Calu3 (cell line): ENCODE measurements at regions of chr9 and their contacts with region 1.

Region 1: DNA sequence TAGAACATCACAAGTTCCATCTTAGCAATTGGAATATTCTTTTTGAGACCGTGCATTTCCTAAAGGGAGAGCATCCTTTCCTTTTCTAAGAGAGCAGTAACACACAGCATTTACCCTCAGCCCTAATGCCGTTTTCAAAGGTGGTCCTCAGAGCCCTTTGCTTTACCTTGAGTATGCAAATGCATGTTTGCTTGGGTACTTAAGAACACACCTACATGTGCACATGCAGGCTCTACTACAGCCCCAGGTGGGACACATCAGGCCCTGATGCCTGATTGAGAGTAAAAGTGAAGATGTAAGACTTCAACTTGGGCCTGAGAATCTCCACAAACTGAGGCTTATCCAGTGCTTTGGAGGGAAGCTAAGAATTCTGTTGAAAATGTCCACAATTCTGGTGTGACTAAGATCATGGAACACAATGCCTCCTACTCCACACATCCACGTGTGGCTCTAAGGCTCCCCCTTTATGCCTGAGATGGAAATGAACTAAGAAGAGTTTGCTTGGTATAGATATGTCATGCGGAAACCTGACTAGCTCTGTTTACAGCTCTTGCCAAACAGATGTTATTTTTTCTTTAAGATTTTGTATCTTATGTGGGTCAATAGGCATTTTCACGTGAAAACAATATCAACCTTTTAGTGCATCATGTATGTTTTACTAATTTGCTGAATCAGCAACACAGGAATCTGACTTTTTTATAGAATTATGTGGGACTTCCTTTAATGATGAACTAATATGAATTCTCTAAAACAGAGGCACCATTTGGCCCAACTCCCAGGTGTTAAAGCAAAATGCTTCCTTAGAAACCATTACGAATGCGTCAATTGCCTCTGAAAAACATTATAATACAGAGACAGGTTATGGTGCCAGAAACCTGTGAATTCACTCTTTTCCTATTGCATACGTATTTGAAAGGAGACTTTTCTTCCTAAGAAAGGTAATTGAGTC is 48.9 kb upstream of the SLC2A8 start:
- DNase-seq: peak; percentile 8
- H3K4me3 Mint-ChIP-seq: no peak overlapping the region
- H3K27ac Mint-ChIP-seq: no peak overlapping the region
- H3K4me1 Mint-ChIP-seq: no peaks in the 10 kb centered on the region
- H3K27me3 Mint-ChIP-seq: no peaks in the 10 kb centered on the region
- CTCF ChIP-seq: peak; percentile 36

Region 2: DNA sequence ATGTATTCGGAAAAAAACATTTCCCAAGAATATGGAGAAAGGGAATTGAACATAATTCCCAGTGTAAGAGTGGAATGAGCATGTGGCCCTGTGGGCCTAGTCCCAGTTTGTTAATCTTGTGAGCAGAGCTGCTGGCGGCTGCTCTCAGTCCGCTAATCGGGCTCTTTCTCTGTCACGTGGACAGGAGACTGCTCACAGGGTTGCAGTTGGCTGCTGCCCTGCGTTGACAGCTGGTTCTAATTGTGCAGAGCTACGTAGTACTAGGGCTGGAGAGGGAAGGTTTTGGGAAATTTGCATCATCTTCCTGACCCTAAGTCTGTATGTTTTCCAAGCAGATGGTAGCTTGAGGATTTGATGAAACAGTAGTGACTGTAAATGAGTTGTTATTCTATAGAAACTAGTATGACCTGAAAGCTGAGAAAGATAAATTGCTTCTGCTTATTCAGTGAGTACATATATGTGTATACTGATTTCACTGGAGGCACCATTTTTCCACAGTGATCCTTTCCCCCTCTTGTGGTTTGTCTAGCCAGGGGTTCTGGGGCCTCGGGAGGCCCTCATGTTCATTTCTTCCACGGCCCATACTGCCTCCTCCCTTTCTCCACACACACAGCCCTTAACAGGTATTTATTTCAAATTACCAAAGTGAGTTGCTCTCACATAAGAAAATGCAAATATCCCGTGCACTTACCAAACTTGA is 326.3 kb before region 1 on chr9:
- CTCF ChIA-PET with region 1: no interaction called
- intact Hi-C with region 1: no loop called
- DNase-seq: no peak
- H3K4me3 Mint-ChIP-seq: no peak overlapping the region
- H3K27ac Mint-ChIP-seq: no peak overlapping the region
- H3K4me1 Mint-ChIP-seq: peaks cover 21% of the 10 kb centered on the region
- H3K27me3 Mint-ChIP-seq: no peaks in the 10 kb centered on the region
- CTCF ChIP-seq: no peak

Region 3: DNA sequence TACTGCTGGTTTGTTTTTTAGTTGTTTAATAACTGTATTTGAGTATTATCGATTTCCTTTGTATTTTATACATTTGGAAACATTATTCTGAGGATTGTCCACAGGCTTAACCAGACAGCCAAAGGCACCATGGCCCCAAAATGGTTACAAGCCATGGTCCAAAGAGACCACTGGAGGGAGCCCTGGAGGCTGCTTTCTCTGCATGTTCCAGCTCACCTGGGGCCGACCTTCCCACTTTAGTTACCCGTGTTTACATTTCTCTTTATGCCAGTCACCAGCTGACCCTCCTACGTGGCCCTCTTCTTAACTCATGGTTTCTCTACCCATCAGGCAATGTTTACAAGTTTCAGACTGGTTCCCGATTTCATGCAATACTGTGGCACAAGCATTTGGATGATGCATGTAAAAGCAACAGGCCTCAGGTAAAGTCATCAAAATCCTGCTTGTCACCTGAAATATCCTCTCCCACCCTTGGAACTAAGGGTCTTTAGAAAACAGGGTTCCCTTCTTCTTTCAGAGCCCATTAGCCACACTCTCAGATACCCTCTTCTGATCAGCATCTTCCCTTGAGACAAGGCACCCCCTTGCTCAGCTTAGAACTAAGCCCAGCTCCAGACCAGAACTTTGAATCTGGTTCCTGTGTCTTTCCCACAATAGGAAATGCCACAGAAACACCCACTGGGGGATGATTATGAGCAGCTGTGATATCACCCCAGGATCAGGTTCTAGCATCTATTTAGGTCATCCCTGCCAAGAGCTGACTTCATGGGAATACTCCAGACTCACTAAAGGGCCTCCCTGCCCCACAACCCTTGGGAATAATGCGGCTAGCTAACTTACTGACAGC is 133.5 kb before region 1 on chr9:
- CTCF ChIA-PET with region 1: interaction called, 10 read pairs
- intact Hi-C with region 1: loop called (anchors 5 kb)
- DNase-seq: peak; percentile 68
- H3K4me3 Mint-ChIP-seq: no peak overlapping the region
- H3K27ac Mint-ChIP-seq: no peak overlapping the region
- H3K4me1 Mint-ChIP-seq: peaks cover 7% of the 10 kb centered on the region
- H3K27me3 Mint-ChIP-seq: peaks cover 19% of the 10 kb centered on the region
- CTCF ChIP-seq: peak; percentile 63

Region 4: DNA sequence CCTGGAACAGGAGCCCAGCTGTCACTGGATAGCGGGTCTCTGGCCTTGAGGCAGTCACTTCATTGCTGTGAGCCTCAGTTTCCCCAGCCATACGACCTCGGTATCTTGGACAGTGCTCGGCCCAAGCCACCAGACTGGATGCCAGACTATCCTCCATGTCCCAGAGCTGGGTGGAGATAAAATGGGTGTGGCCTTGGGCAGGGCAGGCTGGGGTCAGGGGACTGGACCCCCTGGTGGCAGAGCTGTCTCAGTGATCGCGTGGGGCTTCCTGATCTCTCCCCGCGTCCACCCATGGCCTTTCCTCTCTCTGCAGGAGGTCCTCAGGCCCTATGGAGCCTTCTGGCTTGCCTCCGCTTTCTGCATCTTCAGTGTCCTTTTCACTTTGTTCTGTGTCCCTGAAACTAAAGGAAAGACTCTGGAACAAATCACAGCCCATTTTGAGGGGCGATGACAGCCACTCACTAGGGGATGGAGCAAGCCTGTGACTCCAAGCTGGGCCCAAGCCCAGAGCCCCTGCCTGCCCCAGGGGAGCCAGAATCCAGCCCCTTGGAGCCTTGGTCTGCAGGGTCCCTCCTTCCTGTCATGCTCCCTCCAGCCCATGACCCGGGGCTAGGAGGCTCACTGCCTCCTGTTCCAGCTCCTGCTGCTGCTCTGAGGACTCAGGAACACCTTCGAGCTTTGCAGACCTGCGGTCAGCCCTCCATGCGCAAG is 58.8 kb after region 1 on chr9:
- CTCF ChIA-PET with region 1: no interaction called
- intact Hi-C with region 1: no loop called
- DNase-seq: no peak
- H3K4me3 Mint-ChIP-seq: no peak overlapping the region
- H3K27ac Mint-ChIP-seq: no peak overlapping the region
- H3K4me1 Mint-ChIP-seq: no peaks in the 10 kb centered on the region
- H3K27me3 Mint-ChIP-seq: no peaks in the 10 kb centered on the region
- CTCF ChIP-seq: no peak

Region 5: DNA sequence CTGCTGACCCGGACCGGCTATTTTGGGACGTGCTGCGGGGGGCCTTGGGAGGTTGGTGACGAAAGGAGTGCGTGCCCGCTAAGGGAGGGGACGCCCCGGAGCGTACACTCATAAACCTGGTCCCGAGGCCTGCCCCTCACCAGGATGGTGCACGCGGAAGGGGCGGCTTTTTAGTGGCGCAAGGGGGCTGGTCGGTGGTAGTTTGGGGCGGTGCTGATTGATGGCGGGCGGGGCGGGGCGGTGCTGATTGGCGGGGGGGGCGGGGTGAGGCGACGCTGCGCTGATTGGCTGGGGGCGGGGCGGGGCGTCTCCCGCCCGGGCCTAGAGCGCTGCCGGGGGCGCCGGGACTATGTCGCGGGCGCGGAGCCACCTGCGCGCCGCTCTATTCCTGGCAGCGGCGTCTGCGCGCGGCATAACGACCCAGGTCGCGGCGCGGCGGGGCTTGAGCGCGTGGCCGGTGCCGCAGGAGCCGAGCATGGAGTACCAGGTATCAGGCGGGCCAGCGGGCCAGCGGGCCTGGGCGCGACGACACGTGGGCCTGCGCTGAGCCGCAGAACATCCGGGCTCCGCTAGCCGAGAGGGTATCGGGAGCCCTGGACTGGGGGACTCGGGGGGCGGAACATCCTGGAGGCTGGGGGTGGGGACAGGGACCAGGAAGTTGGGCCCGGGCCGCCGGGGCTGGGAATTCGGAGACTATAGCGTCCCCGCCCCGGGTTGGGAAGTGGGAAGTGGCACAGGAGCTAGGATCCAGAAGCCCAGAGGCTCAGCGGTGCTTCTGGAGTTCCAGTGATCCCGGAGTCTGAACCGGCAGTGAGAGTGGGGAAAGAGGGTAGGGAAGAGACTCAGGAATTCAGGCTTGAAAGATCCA is 454.7 kb after region 1 on chr9 and contains the start of gene FPGS:
- CTCF ChIA-PET with region 1: no interaction called
- intact Hi-C with region 1: no loop called
- DNase-seq: peak; percentile 78
- H3K4me3 Mint-ChIP-seq: peak within 1 kb of the TSS; percentile 93
- H3K27ac Mint-ChIP-seq: peak within 1 kb of the TSS; percentile 94
- H3K4me1 Mint-ChIP-seq: no peaks in the 10 kb centered on the region
- H3K27me3 Mint-ChIP-seq: no peaks in the 10 kb centered on the region
- CTCF ChIP-seq: no peak
- total RNA-seq, gene FPGS: 75.2 and 79.9 TPM in 2 replicates